ENCODE measurements at regions of chr2 and their contacts with region 1.

Region 1: GRCh38 chr2:136638193-136638592 is 127.2 kb upstream of the THSD7B start:
- DNase-seq: no peak
- H3K4me3 ChIP-seq: no peak overlapping the region
- H3K27ac ChIP-seq: no peak overlapping the region
- H3K4me1 ChIP-seq: no peaks in the 10 kb centered on the region
- H3K27me3 ChIP-seq: no peaks in the 10 kb centered on the region
- CTCF ChIP-seq: no peak
- EP300 ChIP-seq: no peak
- POLR2A ChIP-seq: no peak

Region 2: DNA sequence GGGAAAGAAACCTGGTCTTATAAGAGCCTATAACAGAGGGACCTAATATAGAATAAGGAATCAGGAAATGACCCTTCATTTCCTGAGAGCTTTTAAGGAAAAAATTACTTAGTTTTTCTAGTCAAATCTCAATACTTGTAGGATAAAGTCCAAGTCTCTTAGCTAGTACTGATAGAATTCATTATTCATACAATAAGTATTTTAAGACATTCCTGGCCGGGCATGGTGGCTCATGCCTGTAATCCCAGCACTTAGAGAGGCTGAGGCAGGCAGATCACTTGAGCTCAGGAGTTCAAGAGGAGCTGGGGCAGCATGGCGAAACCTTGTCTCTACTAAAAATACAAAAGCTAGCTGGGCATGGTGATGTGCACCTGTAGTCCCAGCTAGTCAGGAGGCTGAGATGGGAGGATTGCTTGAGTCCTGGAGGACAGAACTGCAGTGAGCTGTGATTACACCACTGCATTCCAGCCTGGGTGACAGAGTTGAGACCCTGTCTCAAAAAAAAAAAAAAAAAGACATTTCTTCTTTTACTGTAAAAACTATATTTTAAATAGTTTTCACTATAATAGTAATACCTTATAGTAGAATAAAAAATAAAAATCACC is 1582.9 kb before region 1 on chr2:
- intact Hi-C with region 1: loop called in 1 of 4 experiments (anchors 5 kb)
- DNase-seq: no peak
- H3K4me3 ChIP-seq: no peak overlapping the region
- H3K27ac ChIP-seq: no peak overlapping the region
- H3K4me1 ChIP-seq: peaks cover 2% of the 10 kb centered on the region
- H3K27me3 ChIP-seq: no peaks in the 10 kb centered on the region
- CTCF ChIP-seq: no peak
- EP300 ChIP-seq: no peak
- POLR2A ChIP-seq: no peak